Activated CD8-positive, alpha-beta T cell treated with anti-CD3 and anti-CD28 coated beads for 36 hours (primary cell): ENCODE measurements at regions of chr11 and their contacts with region 1.

Region 1: DNA sequence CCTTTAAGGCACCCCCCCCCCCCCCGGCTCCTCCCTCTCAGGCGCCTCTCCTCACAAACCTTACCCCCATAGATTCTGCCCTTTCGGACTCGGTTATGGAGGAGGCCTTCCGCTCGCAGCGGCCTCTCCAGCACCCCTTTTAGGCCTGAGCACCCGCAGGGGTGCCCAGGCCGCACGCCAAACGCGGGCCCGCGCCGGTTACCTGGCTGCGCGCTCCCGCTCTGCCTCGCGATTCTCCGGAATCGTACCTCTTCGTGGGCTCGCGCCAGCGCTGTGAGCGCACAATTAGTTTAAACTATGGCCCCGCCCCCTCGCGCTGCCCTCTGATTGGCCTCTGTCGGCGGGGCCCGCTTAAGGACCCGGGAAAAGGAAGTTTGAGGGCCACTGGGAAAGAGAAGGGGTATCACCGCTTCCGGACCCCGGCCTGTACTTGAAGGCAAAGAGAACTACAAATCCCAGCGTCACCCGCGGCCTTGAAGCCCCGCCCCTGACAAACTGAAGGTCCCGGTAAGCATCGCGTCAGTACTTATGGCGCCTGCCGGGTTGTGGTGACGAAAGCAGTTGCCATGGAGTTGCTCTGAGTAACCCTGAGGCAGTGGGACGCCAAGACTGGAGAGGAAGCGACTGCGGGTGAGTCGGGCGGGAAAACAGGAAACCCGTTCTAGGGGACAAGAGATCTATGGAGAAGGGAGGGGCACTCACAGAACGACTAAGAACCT is at the starts of genes LRRC51 and NUMA1:
- DNase-seq: peak; percentile 100
- ATAC-seq: peak; percentile 93
- H3K4me3 Mint-ChIP-seq: peak within 1 kb of the TSS; percentile 99
- H3K27ac Mint-ChIP-seq: peak within 1 kb of the TSS; percentile 99
- H3K4me1 Mint-ChIP-seq: peaks cover 34% of the 10 kb centered on the region
- H3K27me3 Mint-ChIP-seq: no peaks in the 10 kb centered on the region
- CTCF ChIP-seq: no peak
- total RNA-seq, gene LRRC51: 7.0 to 7.7 TPM
- total RNA-seq, gene NUMA1: 165 to 169 TPM

Region 2: GRCh38 chr11:71991494-71991893 is 88.9 kb before region 1 on chr11:
- CTCF ChIA-PET with region 1: no interaction called
- POLR2A ChIA-PET with region 1: no interaction called
- intact Hi-C with region 1: no loop called
- DNase-seq: no peak
- ATAC-seq: no peak
- H3K4me3 Mint-ChIP-seq: no peak overlapping the region
- H3K27ac Mint-ChIP-seq: peak overlapping the region; percentile 0
- H3K4me1 Mint-ChIP-seq: peaks cover 8% of the 10 kb centered on the region
- H3K27me3 Mint-ChIP-seq: no peaks in the 10 kb centered on the region
- CTCF ChIP-seq: no peak

Region 3: DNA sequence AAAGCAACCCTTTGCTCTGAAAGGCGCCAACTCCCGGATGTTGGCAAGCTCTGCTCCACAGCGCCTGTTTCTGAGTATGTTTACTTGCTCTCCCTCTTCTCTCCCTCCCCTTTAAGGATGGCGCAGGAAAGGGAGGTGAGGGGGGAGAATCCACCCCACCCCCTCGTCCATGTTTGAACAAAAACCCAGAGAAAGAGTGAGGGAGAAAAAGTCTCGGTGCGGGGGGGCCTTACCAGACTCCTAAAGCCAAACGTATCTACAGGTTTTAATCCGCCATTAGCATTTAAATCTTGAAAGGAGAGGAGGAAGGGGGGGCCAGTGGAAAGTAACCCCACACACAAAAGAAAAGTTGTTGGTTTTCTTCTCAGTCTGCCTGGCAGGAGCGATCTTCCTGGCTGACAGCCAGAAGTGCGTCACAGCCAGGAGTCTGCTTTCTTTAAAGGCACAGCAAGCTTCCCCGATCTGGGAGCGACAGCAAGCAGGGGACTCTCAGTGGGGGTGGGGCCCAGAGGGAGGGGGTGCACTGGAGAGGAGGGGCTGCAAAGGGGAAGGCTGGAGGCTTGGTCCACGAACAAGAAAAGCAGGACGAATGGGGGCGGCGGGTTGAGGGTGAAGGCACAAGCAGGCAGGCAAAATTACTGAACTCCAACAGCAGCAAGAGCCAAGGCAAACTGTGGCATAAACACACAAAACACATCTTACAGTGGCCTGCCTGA is 39.5 kb before region 1 on chr11:
- CTCF ChIA-PET with region 1: interaction called, 5 read pairs
- POLR2A ChIA-PET with region 1: interaction called, 15 read pairs
- intact Hi-C with region 1: loop called (anchors 5 kb)
- DNase-seq: peak; percentile 79
- ATAC-seq: peak; percentile 72
- H3K4me3 Mint-ChIP-seq: no peak overlapping the region
- H3K27ac Mint-ChIP-seq: no peak overlapping the region
- H3K4me1 Mint-ChIP-seq: peaks cover 32% of the 10 kb centered on the region
- H3K27me3 Mint-ChIP-seq: no peaks in the 10 kb centered on the region
- CTCF ChIP-seq: no peak

Region 4: GRCh38 chr11:72112321-72113219 is 32.2 kb after region 1 on chr11 and contains the start of gene ANAPC15:
- CTCF ChIA-PET with region 1: no interaction called
- POLR2A ChIA-PET with region 1: no interaction called
- intact Hi-C with region 1: loop called (anchors 1 kb)
- DNase-seq: peak; percentile 100
- ATAC-seq: peak; percentile 90
- H3K4me3 Mint-ChIP-seq: peak within 1 kb of the TSS; percentile 95
- H3K27ac Mint-ChIP-seq: peak within 1 kb of the TSS; percentile 99
- H3K4me1 Mint-ChIP-seq: peaks cover 14% of the 10 kb centered on the region
- H3K27me3 Mint-ChIP-seq: peaks cover 1% of the 10 kb centered on the region
- CTCF ChIP-seq: no peak
- total RNA-seq, gene ANAPC15: 66.0 to 67.4 TPM